ENCODE measurements at regions of chr1 and their contacts with region 1.

Region 1: DNA sequence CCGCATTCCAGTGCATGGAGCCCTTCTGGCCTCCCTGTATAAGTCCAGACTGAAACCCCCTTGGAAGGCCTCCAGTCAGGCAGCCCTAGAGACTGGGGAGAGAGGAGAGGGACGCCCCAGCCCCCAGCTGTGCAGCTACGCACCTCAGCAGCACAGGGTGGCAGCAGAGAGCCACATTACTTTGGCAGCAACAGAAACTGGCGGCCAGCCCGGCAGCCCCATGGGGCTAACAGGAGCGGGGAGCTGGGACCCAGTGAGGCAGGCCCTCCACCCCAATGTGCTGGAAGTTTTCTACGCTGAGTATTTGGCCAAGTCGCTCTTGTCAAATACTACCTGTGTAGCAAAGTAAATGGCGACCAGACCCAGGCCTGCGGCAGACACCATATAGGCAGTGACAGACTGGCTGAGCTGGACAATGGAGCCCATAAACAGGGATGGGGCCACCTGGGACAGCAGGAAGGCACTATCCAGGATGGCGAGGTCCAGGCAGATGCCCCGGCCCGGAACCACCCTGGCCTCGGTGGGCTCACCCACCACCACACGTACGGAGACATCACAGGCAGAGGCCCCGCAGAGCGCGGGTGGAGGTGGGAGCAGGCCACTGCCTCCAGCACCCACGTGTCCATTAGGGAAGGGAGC is 21.2 kb downstream of the SLC45A3 start:
- DNase-seq: peak; percentile 82 to 96 (median 90)

Region 2: DNA sequence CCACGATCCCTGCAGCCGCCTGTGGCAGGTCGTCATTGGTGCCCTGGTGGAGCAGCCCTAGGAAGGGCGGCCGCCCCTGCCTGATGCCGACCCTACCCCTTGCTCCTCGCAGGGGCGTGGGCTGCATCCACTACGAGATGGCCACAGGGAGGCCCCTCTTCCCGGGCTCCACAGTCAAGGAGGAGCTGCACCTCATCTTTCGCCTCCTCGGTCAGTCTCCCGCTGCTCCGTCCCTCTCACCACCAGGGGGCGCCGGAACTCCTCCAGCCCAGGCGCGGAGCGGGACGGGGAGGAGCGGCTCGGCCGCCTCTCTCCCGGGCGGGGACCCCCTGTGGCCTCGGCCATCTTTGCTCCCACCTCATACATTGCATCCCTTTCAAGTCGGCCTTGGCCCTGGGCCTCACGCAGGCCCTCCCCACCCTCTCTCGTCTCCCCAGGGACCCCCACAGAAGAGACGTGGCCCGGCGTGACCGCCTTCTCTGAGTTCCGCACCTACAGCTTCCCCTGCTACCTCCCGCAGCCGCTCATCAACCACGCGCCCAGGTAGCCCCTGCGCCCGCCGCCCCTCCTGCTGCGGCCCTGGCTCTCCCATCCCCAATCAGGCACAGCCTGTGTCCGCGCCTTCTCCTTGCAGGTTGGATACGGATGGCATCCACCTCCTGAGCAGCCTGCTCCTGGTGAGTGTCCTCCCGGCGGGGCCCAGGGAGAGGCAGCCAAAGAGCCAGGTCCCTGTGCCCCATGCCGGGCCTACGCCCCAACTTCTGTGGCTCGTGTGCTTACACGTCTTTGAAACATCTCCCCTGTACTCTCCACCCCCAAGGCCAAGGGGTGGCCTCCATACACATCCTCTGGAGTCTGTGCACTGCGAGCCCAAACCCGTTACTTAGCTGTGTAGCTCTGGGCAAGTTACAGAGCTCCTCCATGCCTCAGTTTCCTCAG is 129.9 kb before region 1 on chr1:
- intact Hi-C with region 1: loop called (anchors 5 kb)
- DNase-seq: peak; percentile 72 to 97 (median 91)

Region 3: DNA sequence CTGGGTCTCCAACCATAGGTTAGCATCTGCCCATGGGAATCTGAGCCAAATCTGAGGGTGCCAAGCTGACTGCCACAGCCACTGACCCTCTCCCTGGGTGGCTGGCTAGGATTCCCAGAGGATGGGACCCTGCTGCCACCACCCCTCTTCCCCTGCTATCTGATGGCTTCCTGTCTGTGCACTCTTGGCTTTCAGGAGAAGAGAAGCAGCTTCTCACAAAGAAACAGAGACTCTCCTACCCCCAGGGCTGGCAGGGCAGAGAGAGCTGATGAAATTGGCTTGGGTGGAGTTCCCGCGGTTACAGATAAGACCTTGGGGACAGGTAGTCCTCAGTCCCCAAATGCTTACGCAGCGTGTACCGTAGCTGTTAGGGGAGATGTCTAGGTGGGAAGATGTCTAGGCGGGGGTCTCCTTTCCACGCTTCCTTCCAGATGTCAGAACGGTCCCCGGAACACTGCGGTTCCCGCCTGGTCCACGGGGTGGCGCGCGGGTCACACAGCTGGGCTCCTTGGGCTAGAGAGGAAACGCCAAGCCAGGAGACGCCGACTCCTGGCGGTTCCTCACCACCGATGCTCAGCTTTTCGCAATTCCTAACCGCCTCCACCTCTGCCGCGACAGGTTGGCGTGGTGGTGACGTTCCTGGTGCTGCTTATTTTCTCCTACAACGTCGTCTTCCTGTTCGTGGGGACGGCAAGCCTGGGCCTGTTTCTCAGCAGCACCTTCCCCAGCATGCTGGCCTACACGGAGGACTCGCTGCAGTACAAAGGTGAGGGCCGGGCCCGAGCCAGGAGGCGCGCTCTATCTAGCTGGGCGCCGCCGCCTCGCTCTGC is 67.3 kb before region 1 on chr1:
- intact Hi-C with region 1: loop called (anchors 1 kb)
- DNase-seq: peak; percentile 87 to 97 (median 93)

Region 4: GRCh38 chr1:205711104-205712020 is 52.3 kb after region 1 on chr1:
- intact Hi-C with region 1: loop called (anchors 2 kb)
- DNase-seq: peak in 37 of 42 donors; percentile 23 to 95 (median 74)